Transverse colon (tissue), 4 donors: ENCODE measurements at regions of chr2 and their contacts with region 1.

Region 1: GRCh38 chr2:6506361-6506794 is 359.3 kb downstream of the CMPK2 start:
- DNase-seq: no peak
- H3K4me3 ChIP-seq: no peak overlapping the region
- H3K27ac ChIP-seq: no peak overlapping the region
- H3K4me1 ChIP-seq: no peaks in the 10 kb centered on the region
- H3K27me3 ChIP-seq: no peaks in the 10 kb centered on the region
- CTCF ChIP-seq: no peak
- EP300 ChIP-seq: no peak
- POLR2A ChIP-seq: no peak

Region 2: GRCh38 chr2:5834501-5834900 is 671.9 kb before region 1 on chr2:
- in situ Hi-C with region 1: no loop called
- intact Hi-C with region 1: no loop called
- DNase-seq: no peak
- H3K4me3 ChIP-seq: no peak overlapping the region
- H3K27ac ChIP-seq: no peak overlapping the region
- H3K4me1 ChIP-seq: no peaks in the 10 kb centered on the region
- H3K27me3 ChIP-seq: no peaks in the 10 kb centered on the region
- CTCF ChIP-seq: no peak
- EP300 ChIP-seq: no peak
- POLR2A ChIP-seq: no peak

Region 3: GRCh38 chr2:6290628-6291027 is 215.8 kb before region 1 on chr2:
- in situ Hi-C with region 1: no loop called
- intact Hi-C with region 1: no loop called
- DNase-seq: no peak
- H3K4me3 ChIP-seq: no peak overlapping the region
- H3K27ac ChIP-seq: no peak overlapping the region
- H3K4me1 ChIP-seq: no peaks in the 10 kb centered on the region
- H3K27me3 ChIP-seq: no peaks in the 10 kb centered on the region
- CTCF ChIP-seq: no peak
- EP300 ChIP-seq: no peak
- POLR2A ChIP-seq: no peak

Region 4: DNA sequence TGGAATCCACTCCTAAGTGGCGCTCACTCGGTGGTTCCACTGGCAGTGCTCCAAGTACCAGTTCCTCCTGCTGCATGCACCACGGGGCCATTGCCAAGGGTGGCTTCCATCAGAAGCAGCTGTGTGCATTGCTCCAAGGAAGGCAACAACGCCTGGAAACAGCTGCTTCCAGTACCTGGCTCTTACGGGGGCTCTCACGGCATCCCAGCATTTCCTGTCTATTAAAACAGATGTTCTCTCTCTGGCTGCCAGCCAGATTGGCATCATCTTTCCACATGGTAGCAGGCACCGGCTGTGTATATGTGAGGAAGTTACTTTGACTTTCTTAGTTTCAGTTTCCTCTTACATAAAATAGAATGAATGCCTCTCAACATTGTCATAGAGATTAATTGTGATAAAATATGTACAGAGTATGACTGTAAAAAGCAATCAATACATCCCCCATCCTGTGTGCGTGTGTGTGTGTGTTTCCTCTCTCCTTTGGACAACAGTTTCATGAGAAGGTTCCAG is 274.4 kb after region 1 on chr2:
- in situ Hi-C with region 1: no loop called
- intact Hi-C with region 1: loop called (anchors 5 kb)
- DNase-seq: peak; percentile 23
- H3K4me3 ChIP-seq: no peak overlapping the region
- H3K27ac ChIP-seq: no peak overlapping the region
- H3K4me1 ChIP-seq: no peaks in the 10 kb centered on the region
- H3K27me3 ChIP-seq: no peaks in the 10 kb centered on the region
- CTCF ChIP-seq: no peak
- EP300 ChIP-seq: no peak
- POLR2A ChIP-seq: no peak